ENCODE measurements at regions of chr5 and their contacts with region 1.

Region 1: GRCh38 chr5:55159763-55160492 is at the start of gene GPX8:
- DNase-seq: peak; percentile 28
- H3K4me3 Mint-ChIP-seq: no peak within 1 kb of the TSS
- H3K27ac Mint-ChIP-seq: no peak within 1 kb of the TSS
- H3K4me1 Mint-ChIP-seq: no peaks in the 10 kb centered on the region
- H3K27me3 Mint-ChIP-seq: peaks cover 53% of the 10 kb centered on the region
- total RNA-seq, gene GPX8: not detected

Region 2: GRCh38 chr5:54186912-54187445 is 972.9 kb before region 1 on chr5:
- CTCF ChIA-PET with region 1: no interaction called
- POLR2A ChIA-PET with region 1: no interaction called
- DNase-seq: no peak
- H3K4me3 Mint-ChIP-seq: no peak overlapping the region
- H3K27ac Mint-ChIP-seq: no peak overlapping the region
- H3K4me1 Mint-ChIP-seq: no peaks in the 10 kb centered on the region
- H3K27me3 Mint-ChIP-seq: no peaks in the 10 kb centered on the region

Region 3: GRCh38 chr5:54867310-54867944 is 292.5 kb before region 1 on chr5:
- CTCF ChIA-PET with region 1: interaction called, 21 read pairs
- POLR2A ChIA-PET with region 1: no interaction called
- DNase-seq: no peak
- H3K4me3 Mint-ChIP-seq: no peak overlapping the region
- H3K27ac Mint-ChIP-seq: no peak overlapping the region
- H3K4me1 Mint-ChIP-seq: peaks cover 20% of the 10 kb centered on the region
- H3K27me3 Mint-ChIP-seq: peaks cover 61% of the 10 kb centered on the region

Region 4: GRCh38 chr5:54895816-54896341 is 264.0 kb before region 1 on chr5:
- CTCF ChIA-PET with region 1: interaction called, 12 read pairs
- POLR2A ChIA-PET with region 1: interaction called, 3 read pairs
- DNase-seq: no peak
- H3K4me3 Mint-ChIP-seq: peak overlapping the region; percentile 11
- H3K27ac Mint-ChIP-seq: no peak overlapping the region
- H3K4me1 Mint-ChIP-seq: peaks cover 5% of the 10 kb centered on the region
- H3K27me3 Mint-ChIP-seq: peaks cover 66% of the 10 kb centered on the region

Region 5: GRCh38 chr5:55052383-55052931 is 107.5 kb before region 1 on chr5:
- CTCF ChIA-PET with region 1: no interaction called
- POLR2A ChIA-PET with region 1: no interaction called
- DNase-seq: no peak
- H3K4me3 Mint-ChIP-seq: no peak overlapping the region
- H3K27ac Mint-ChIP-seq: no peak overlapping the region
- H3K4me1 Mint-ChIP-seq: peaks cover 33% of the 10 kb centered on the region
- H3K27me3 Mint-ChIP-seq: no peaks in the 10 kb centered on the region

Region 6: GRCh38 chr5:55172051-55172899 is 12.3 kb after region 1 on chr5:
- CTCF ChIA-PET with region 1: interaction called, 13 read pairs
- POLR2A ChIA-PET with region 1: no interaction called
- DNase-seq: peak; percentile 73
- H3K4me3 Mint-ChIP-seq: peak overlapping the region; percentile 77
- H3K27ac Mint-ChIP-seq: no peak overlapping the region
- H3K4me1 Mint-ChIP-seq: peaks cover 35% of the 10 kb centered on the region
- H3K27me3 Mint-ChIP-seq: peaks cover 71% of the 10 kb centered on the region

Measured in activated CD4-positive, alpha-beta memory T cell treated with anti-CD3 and anti-CD28 coated beads, Interleukin-2, amount 10 ng/mL, durations not matched to agents 7 days and 5 days (primary cell).